ENCODE measurements at regions of chr7 and their contacts with region 1.

Region 1: DNA sequence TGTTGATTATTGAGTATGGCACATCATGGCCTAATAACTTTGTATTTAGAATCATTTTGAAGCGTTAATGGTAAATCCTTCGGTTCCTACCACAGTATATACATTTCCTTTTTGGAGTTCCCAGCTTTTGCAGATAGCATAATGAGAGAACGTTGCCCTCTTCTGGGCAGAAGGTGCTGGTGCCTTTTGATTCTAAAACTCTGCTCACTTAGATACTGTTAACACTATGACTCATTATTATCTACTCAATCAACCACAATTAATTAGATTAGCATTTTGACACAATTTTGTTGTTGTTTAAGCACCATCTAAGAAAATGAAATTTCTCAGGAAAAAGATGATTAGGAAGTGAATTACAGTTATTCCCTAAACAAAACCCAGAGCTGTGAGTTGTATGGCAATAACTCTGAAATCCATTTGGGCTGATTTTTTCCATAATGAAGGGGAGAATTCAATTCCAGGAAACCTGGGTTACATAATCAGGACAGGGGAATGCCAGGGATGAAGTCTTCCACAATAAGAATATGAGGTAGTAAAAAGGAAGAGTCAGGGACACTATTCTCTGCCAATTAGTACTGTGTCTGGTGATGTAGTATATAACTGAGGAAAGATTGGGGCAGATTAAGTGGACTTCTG is 11.5 kb upstream of the DLD start:
- DNase-seq: peak; percentile 47
- H3K4me3 Mint-ChIP-seq: no peak overlapping the region
- H3K27ac Mint-ChIP-seq: peak overlapping the region; percentile 24
- H3K4me1 Mint-ChIP-seq: peaks cover 20% of the 10 kb centered on the region
- H3K27me3 Mint-ChIP-seq: no peaks in the 10 kb centered on the region

Region 2: DNA sequence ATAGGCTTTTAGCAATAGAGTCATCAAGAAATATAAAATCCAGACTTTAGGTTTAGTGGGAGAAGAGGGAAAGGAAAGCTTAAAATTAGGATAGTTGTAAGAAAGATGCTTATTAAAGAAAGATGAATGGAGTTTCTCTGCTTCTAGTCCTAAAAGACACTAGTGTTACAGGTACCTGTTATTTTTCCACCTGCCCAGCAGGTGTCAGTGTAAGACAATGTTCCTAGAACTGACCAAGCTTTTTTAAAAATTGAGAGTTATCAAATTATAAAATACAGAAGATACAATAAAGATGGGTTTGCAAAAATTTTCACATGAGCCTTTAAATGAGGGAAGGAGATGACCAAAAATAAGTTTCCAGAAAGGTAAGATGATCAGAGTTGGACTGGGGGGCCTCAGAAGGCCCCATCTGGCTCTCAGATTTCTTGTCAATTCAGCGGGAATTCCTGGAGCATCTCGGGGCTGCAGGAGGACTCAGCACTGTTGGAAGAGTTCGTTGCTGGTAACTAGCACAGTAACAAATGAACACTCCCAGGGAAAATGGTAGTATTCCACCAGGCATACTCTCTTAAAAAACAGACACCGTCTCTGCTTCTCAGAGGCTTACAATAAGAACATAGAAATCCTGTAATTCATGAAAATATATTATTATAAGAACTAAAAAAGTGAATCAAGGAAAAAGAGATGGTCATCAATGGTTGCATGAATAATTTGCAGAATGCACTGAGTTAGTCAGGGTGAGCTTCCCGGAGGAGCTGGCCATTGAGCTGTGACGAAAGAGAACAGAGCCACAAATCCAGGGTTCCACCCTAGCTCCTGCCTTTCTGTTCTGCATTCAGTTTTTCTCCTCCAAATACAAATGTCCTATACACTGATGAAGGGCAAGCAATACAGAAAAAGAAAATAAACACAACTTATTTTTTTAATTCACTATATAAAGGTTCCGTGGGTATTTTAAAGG is 1086.2 kb before region 1 on chr7:
- CTCF ChIA-PET with region 1: interaction called, 3 read pairs
- POLR2A ChIA-PET with region 1: no interaction called
- intact Hi-C with region 1: loop called (anchors 5 kb)
- DNase-seq: no peak
- H3K4me3 Mint-ChIP-seq: no peak overlapping the region
- H3K27ac Mint-ChIP-seq: no peak overlapping the region
- H3K4me1 Mint-ChIP-seq: no peaks in the 10 kb centered on the region
- H3K27me3 Mint-ChIP-seq: peaks cover 4% of the 10 kb centered on the region

Region 3: DNA sequence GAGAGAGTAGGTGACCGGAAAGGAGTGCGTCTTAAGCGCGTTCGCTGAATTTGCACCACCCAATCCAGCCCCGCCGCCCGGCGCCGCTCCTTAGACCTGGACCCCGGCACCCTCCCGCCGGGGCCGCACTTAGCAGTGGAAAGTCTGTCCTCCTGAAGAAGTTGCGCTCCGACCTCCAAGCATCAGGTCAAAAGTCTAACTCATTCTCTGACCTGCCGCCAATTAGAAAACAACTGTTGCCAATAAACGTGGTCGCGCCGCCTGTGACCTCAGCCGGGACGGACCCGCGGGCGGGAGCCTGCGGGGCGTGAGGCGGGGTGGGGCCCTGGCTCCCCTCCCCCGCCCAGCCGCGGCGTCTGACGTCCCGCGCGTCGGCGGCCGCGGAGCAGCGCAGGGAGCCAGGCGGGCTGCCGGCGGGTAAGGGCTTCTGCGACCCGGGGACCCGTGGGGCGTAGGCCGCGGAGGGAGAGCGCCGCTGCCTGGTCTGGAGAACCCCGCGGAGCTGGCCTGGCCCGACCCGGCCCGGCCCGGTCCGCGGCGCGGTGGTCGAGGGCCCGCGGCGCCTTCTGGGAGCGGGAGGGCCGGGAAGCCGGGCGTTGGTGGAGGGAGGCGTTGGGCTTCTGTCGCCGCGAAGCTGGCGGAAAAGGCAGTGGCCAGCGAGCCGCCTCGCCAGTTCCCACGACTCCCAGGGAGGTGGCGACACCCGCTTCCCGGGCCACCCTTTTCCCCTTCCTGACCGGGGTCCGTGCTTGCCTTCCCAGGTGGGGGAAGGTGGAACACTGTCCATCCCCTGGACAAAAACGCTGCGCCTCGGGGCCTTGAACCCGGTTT is 299.4 kb before region 1 on chr7 and contains the start of gene BCAP29:
- CTCF ChIA-PET with region 1: interaction called, 3 read pairs
- POLR2A ChIA-PET with region 1: no interaction called
- intact Hi-C with region 1: loop called (anchors 5 kb)
- DNase-seq: peak; percentile 76
- H3K4me3 Mint-ChIP-seq: peak within 1 kb of the TSS; percentile 87
- H3K27ac Mint-ChIP-seq: peak within 1 kb of the TSS; percentile 78
- H3K4me1 Mint-ChIP-seq: peaks cover 19% of the 10 kb centered on the region
- H3K27me3 Mint-ChIP-seq: no peaks in the 10 kb centered on the region
- total RNA-seq, gene BCAP29: 42.3 to 42.9 TPM

Region 4: GRCh38 chr7:107725151-107725740 is 154.3 kb before region 1 on chr7:
- CTCF ChIA-PET with region 1: interaction called, 13 read pairs
- POLR2A ChIA-PET with region 1: no interaction called
- intact Hi-C with region 1: no loop called
- DNase-seq: peak; percentile 42
- H3K4me3 Mint-ChIP-seq: no peak overlapping the region
- H3K27ac Mint-ChIP-seq: no peak overlapping the region
- H3K4me1 Mint-ChIP-seq: no peaks in the 10 kb centered on the region
- H3K27me3 Mint-ChIP-seq: peaks cover 3% of the 10 kb centered on the region

Region 5: DNA sequence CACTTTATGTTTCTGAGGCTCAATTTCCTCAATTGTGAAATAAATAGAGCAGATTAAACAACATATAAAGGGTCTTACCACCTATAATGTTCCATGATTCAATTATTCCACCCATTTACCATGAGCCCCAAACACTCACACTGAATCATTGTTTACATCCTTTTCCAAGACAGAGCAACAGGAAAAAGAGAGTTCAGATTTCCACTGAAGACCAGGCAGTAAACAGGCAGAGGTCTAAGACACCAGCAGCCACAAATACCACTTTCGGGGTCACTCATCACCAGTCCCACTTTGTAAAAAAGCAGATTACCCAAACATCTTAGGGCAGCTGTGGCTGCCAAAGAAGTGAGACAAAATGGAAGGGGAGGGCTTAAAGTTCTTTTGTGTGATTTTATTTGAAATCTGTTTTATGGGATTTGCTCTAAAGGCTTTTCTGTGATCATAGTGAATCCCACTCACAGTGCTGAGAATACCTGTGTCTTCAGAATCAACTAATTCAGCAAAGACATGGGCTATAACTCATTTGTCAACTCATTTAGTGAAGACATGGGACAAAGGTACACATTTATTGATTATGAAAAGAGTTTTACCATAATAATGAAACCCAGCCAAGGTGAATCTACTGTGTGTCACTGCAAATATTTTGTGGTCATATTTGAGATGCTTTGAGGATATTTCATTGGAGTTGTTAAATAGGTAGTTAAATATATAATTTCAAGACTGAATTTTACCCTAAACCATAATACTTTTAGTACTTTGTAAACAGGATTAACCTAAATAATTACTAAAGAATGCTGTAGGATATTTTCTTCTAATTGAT is 13.4 kb before region 1 on chr7:
- CTCF ChIA-PET with region 1: interaction called, 25 read pairs
- POLR2A ChIA-PET with region 1: no interaction called
- intact Hi-C with region 1: no loop called
- DNase-seq: peak; percentile 54
- H3K4me3 Mint-ChIP-seq: no peak overlapping the region
- H3K27ac Mint-ChIP-seq: peak overlapping the region; percentile 79
- H3K4me1 Mint-ChIP-seq: peaks cover 26% of the 10 kb centered on the region
- H3K27me3 Mint-ChIP-seq: no peaks in the 10 kb centered on the region

Region 6: DNA sequence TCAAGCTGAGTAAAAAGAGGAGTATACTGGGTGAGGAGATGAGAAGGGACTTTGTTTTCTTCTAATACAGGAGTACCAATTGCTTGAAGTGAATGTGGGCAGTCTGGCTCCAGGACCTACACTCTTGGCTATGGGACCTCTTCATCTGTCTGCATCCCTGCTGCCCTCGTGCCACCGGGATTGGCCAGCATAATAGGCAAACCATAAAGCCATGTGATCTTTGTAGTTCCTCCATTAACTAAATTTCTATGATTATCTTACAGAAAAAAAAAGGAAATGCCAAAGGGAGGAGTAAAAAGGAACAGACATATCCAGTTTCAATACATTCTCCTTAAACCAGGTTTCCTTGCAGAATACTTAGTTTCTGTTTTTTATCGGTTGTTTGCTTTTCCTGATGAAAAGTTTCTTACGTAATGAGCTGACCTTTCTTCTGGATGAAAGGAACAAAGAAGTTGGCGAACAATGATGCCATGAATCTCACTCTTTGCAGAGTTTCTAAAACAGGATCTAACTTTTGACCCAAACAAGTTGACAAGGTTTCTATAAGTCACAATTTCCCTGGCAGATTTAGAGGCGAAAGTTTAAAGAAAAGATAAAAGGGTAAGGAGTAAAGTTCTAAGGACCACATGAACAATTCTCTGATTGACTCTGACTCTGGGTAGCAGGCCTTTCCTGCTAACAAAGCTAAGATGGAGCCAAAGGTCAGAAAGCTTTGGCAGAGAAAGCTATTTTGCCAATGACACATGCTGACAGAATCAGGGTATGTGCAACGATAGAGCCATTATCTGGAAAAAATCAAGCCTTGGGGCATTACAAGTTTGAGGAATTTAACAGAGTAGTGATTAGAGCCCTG is 69.4 kb after region 1 on chr7:
- CTCF ChIA-PET with region 1: no interaction called
- POLR2A ChIA-PET with region 1: no interaction called
- intact Hi-C with region 1: no loop called
- DNase-seq: no peak
- H3K4me3 Mint-ChIP-seq: no peak overlapping the region
- H3K27ac Mint-ChIP-seq: no peak overlapping the region
- H3K4me1 Mint-ChIP-seq: no peaks in the 10 kb centered on the region
- H3K27me3 Mint-ChIP-seq: peaks cover 3% of the 10 kb centered on the region